Left ventricle myocardium superior (tissue), 1 donor: ENCODE measurements at regions of chr4 and their contacts with region 1.

Region 1: DNA sequence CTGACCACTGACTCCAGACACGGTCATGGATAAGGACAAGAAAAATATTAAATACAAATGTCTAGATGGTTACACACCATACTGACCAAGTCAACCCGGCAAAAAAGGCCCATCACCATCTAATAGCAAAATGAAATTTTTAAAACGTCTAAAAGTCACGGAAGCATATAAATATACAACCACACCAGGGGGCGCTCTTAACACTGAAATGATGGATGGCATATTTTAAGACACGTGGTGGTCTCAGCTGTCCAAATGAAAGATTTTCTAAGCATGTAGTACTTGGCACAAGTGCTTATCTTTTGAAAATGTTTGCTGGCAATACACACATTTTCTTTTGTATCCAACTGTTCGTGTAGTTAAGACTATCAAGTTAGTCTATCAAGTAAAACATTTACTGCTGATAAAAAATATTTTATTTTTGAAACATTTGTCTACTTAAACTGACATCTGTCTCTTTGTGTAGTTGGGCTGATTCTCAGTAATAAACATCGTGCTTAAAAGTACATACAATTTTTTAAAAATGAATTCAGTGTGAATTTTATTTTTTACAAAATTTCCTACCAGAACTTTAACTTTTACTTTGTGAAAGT is 64.6 kb downstream of the COX7B2 start:
- DNase-seq: no peak
- ATAC-seq: no peak

Region 2: GRCh38 chr4:46715468-46715867 is 129.0 kb before region 1 on chr4:
- intact Hi-C with region 1: no loop called
- DNase-seq: no peak
- ATAC-seq: no peak

Region 3: DNA sequence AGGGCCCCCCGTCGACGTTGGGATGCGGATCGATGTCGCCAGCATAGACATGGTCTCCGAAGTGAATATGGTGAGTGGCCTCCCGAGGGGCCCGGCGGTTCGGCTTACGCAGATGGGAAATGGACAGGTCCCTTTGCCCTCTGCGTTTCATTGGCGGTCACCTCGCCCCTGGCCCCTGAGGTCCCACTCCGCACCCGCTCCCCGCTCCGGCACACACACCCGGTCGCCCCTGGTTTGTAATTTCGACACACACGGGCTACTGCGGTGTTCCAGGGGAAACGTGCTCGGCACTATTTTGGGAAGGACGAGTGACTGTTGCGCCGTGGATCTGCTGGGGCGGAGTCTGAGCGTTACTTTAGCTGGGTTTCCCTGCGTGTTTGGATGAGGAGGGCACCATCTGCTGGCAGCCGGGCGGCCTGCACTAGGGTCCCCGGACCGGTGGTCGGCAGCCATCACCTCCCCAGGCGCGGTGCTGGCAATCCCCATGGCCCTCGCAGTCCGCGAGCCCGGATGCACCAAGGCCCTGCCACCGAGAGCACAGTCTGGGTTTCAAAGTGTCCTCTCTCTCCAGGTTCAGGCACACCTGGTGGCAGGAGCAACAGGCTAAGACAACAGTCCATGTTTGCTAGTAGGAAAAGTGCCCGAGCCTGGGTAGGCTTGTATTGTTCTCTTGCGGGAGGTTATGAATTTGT is 188.1 kb after region 1 on chr4:
- intact Hi-C with region 1: loop called (anchors 10 kb)
- DNase-seq: peak; percentile 80
- ATAC-seq: peak; percentile 96

Region 4: DNA sequence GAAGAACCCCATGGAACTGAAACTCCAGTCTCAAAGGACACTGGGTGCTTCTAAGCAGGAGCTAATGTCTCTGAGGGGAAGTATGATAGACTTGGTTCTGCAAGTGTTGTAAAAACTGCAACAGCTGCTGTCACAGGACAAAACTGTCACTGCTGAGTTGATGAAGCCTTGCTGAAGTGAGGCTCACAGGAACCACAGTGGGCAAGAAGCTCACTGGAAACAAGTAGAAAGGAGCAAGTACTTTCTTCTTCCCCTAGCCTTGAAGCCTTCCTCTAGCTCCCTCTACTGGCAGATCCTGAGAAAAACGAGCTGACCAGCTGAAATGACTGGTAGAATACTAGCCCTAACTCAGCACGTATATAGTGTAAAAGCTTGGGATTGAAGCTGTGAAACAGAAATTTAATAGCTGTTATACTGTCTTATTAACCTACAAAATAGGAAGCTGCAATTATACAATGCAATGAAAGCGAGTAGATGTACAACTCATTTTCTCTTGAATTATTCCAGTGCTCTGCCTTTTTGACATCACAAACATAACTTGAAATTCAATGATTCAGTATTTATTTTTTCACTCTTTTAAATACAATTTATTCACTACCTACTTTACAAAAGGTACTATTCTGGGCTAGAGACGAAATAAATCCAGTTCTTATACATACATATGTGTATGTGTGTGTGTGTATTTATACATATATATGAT is 278.3 kb after region 1 on chr4:
- intact Hi-C with region 1: loop called (anchors 10 kb)
- DNase-seq: no peak
- ATAC-seq: peak; percentile 73

Region 5: DNA sequence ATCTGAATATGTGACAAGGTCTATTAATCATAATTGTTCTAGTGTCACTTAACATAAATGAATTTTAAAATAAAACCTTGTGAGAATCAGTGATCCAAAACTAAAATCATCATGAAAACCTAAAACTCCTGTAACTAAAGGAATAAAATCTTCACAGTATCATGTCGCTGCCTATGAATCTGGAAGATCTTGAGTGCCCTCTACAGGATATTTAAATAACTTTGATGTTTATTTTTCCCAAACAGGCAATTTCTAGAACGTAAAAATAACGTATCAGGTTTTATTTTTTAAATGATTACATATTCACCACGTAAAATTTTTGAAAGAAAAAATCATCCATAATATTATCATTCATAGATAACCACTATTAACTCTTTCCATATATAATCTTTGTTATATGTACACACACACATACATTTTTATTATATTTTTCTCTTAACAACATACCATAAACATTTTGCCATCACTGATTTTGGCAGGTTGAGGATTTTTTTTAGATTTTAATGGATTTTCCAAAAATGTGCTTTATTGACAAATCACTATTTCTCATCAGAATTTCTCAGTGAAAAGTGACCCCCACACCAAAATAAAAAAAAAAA is 539.5 kb after region 1 on chr4:
- intact Hi-C with region 1: loop called (anchors 5 kb)
- DNase-seq: no peak
- ATAC-seq: no peak

Region 6: DNA sequence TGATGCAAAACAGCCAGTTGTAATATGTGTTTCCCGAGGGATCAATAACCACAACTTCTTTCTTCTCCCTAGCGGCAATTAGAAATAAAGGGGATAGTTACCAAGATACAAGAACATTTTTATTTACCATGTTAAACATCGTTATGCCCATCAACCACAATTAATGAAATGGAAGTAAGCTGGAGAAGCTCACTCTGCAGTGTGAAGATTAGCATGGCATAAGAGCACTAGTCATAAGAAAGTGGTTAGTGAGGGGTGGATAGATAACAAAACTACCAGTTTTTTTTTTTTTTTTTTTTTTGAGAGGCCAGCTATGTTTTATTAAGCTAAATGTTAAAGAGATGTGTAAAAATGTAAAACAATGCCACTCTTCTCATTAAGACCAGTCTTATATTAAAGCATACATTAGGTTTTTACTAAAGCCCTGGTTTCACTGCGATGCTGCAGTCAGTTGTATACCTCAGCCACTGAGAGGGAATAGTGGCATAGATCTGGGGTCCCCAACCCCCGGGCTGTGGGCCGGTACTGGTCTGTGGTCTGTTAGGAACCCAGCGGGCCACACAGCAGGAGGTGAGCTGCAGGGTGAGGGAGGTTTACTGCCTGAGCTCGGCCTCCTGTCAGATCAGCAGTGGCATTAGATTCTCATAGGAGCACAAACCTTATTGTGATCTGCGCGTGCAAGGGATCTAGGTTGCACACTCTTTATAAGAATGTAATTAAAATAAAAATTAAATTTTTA is 1097.8 kb after region 1 on chr4:
- intact Hi-C with region 1: no loop called
- DNase-seq: no peak
- ATAC-seq: no peak